ENCODE measurements at regions of chr1 and their contacts with region 1.

Region 1: DNA sequence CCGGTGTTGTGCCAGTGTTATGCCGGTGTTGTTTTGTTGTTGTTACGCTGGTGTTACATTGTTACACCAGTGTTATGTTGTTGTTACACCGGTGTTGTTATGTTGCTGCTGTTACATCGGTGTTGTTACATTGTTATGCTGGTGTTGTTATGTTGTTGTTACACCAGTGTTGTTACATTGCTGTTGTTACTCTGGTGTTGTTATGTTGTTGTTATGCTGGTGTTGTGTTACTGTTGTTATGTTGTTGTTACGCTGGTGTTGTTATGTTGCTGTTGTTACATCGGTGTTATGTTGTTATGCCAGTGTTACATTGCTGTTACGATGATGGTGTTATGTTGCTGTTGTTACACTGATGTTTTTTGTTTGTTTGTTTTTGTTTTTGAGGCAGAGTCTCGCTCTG is 24.1 kb downstream of the H6PD start:
- DNase-seq: no peak
- H3K4me3 ChIP-seq: no peak overlapping the region
- H3K27ac ChIP-seq: no peak overlapping the region
- H3K4me1 ChIP-seq: no peaks in the 10 kb centered on the region
- H3K27me3 ChIP-seq: no peaks in the 10 kb centered on the region
- CTCF ChIP-seq: no peak

Region 2: DNA sequence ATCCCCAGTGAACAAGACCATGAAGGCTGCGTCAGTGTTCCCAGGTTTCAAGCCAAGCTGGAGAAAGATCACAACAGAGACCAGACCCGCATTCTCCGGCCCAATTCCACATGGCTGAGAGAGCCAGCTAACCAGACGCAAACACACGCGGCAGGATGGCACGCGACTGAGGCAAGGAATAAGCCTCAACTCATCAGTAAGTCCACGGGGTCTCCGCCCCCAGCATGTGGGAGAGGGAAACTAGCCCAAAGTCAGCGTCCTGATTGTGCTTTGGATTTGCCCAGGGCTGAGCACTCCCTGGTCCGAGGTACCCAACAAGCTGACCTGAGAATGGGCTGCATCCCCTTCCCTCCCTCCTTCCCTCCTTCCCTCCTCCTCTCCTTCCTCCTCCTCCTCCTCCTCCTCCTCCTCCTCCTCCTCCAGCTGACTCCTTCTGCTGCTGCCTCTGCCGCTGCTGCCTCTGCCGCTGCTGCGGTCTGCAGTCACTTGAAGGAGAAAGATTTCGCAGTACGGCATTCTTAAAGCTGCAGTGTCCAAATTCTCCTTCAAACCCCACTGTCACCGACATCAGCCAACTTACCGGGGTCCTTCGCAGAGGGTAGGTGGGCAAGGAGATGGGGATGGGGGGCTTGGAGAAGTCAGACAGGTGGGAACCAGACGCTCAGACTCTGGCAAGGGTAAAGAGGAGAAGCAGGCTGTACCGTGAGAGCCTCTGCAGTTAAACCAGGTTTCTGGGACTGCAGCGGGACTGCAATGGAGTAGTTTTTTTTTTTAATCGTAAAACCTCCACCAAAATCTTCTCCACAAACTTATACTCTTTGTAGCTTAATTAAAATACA is 57.0 kb before region 1 on chr1:
- CTCF ChIA-PET with region 1: interaction called, 11 read pairs
- POLR2A ChIA-PET with region 1: no interaction called
- intact Hi-C with region 1: no loop called
- DNase-seq: peak in 1 of 2 experiments; percentile 19
- H3K4me3 ChIP-seq: peak overlapping the region; percentile 54; the same call in 1 of the 2 replicates
- H3K27ac ChIP-seq: no peak overlapping the region
- H3K4me1 ChIP-seq: peaks cover 2% of the 10 kb centered on the region; the same call in 1 of the 2 replicates
- H3K27me3 ChIP-seq: peaks cover 30% of the 10 kb centered on the region; the same call in 1 of the 2 replicates
- CTCF ChIP-seq: no peak

Region 3: DNA sequence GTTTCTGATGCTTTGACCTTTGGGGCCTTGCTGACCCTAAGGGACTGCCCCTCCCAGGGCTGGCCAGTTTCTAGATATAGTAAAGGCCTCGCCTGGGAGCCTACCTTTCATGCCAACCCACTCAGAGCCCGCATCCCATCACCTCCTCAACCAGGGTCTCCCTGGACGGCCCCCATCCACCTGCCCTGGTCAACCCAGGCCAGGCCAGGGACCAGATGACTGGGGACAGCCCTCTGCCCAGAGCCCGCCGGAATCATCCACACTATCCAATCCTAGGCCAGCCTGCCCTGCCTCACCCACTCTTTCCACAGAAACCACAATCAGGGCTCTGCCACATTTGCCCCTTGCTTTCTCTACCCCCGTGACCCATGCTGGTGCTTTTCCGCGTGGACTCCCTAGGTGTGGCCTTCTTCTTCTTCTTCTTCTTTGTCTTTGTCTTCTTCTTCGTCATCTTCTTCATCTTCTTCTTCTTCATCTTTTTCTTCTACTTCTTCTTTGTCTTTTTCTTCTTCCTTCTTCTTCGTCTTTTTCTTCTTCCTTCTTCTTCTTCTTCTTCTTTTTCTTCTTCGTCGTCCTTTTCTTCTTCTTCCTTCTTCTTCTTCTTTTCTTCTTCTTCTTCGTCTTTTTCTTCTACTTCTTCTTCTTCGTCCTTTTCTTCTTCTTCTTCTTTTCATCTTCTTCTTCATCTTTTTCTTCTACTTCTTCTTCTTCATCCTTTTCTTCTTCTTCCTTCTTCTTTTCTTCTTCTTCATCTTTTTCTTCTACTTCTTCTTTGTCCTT is 35.6 kb before region 1 on chr1:
- CTCF ChIA-PET with region 1: no interaction called
- POLR2A ChIA-PET with region 1: no interaction called
- intact Hi-C with region 1: no loop called
- DNase-seq: no peak
- H3K4me3 ChIP-seq: no peak overlapping the region
- H3K27ac ChIP-seq: no peak overlapping the region
- H3K4me1 ChIP-seq: no peaks in the 10 kb centered on the region
- H3K27me3 ChIP-seq: no peaks in the 10 kb centered on the region
- CTCF ChIP-seq: no peak

Region 4: DNA sequence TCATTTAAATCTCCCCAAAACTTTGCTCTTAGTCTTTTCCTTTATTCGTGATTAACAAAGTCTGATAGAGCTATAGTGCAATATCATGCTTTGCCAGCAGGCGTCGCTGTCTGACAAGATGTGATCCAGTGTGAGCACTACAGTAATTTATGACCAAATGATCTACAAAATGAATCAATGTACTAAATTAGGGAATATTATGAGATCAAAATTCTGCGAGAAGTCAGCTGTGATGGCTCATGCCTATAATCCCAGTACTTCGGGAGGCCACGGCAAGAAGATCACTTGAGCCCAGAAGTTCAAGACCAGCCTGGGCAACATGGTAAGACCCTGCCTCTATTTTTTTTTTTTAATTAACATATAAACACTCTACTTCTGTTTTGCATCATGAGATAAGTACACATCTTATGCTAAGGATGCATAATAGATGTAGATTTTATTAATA is 30.5 kb after region 1 on chr1:
- CTCF ChIA-PET with region 1: no interaction called
- POLR2A ChIA-PET with region 1: no interaction called
- intact Hi-C with region 1: no loop called
- DNase-seq: peak; percentile 46 to 57
- H3K4me3 ChIP-seq: no peak overlapping the region
- H3K27ac ChIP-seq: peak overlapping the region; percentile 79; the same call in 1 of the 2 replicates
- H3K4me1 ChIP-seq: peaks cover 26% of the 10 kb centered on the region
- H3K27me3 ChIP-seq: no peaks in the 10 kb centered on the region
- CTCF ChIP-seq: peak; percentile 93